Right ventricle myocardium superior (tissue), 1 donor: ENCODE measurements at regions of chr22 and their contacts with region 1.

Region 1: GRCh38 chr22:29202212-29203192 is 3.2 kb upstream of the EMID1 start:
- DNase-seq: peak; percentile 87
- ATAC-seq: peak; percentile 74

Region 2: GRCh38 chr22:28841111-28841510 is 361.4 kb before region 1 on chr22:
- intact Hi-C with region 1: loop called (anchors 10 kb)
- DNase-seq: no peak
- ATAC-seq: no peak

Region 3: GRCh38 chr22:29503811-29504372 is 301.4 kb after region 1 on chr22:
- intact Hi-C with region 1: no loop called
- DNase-seq: peak; percentile 59
- ATAC-seq: peak; percentile 75